ENCODE measurements at regions of chr2 and their contacts with region 1.

Region 1: GRCh38 chr2:51413726-51414125 is 381.8 kb upstream of the NRXN1 start:
- DNase-seq: no peak
- ATAC-seq: no peak
- H3K4me3 ChIP-seq: no peak overlapping the region
- H3K4me3 Mint-ChIP-seq: no peak overlapping the region
- H3K27ac ChIP-seq: no peak overlapping the region
- H3K27ac Mint-ChIP-seq: no peak overlapping the region
- H3K4me1 ChIP-seq: no peaks in the 10 kb centered on the region
- H3K4me1 Mint-ChIP-seq: no peaks in the 10 kb centered on the region
- H3K27me3 ChIP-seq: no peaks in the 10 kb centered on the region
- H3K27me3 Mint-ChIP-seq: no peaks in the 10 kb centered on the region
- CTCF ChIP-seq: no peak

Region 2: DNA sequence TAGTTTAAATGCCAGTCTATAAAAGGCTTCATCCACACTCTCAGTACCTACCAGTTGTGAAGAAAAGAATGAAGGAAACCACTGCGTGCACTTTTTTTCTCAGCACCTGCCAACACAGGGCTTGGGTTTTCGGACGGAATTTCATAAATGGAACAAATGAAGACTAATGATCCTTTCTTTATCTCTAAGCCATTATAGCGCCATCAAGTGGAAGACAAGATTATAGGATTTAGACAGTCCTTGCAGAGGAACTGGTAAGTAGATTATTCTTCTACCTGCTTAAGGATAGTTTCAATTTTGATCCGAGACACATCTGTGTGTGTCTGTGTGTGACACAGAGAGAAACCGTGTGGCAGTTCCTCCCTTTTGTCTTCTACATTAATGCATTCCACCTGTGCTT is 627.4 kb before region 1 on chr2:
- CTCF ChIA-PET with region 1: no interaction called
- POLR2A ChIA-PET with region 1: no interaction called
- intact Hi-C with region 1: no loop called
- DNase-seq: no peak
- ATAC-seq: no peak
- H3K4me3 ChIP-seq: no peak overlapping the region
- H3K4me3 Mint-ChIP-seq: no peak overlapping the region
- H3K27ac ChIP-seq: no peak overlapping the region
- H3K27ac Mint-ChIP-seq: no peak overlapping the region
- H3K4me1 ChIP-seq: no peaks in the 10 kb centered on the region
- H3K4me1 Mint-ChIP-seq: no peaks in the 10 kb centered on the region
- H3K27me3 ChIP-seq: no peaks in the 10 kb centered on the region
- H3K27me3 Mint-ChIP-seq: no peaks in the 10 kb centered on the region
- CTCF ChIP-seq: no peak

Region 3: GRCh38 chr2:51424418-51424817 is 10.7 kb after region 1 on chr2:
- CTCF ChIA-PET with region 1: no interaction called
- POLR2A ChIA-PET with region 1: no interaction called
- intact Hi-C with region 1: loop called in 1 of 2 experiments (anchors 1 kb)
- DNase-seq: no peak
- ATAC-seq: no peak
- H3K4me3 ChIP-seq: no peak overlapping the region
- H3K4me3 Mint-ChIP-seq: no peak overlapping the region
- H3K27ac ChIP-seq: no peak overlapping the region
- H3K27ac Mint-ChIP-seq: no peak overlapping the region
- H3K4me1 ChIP-seq: no peaks in the 10 kb centered on the region
- H3K4me1 Mint-ChIP-seq: no peaks in the 10 kb centered on the region
- H3K27me3 ChIP-seq: no peaks in the 10 kb centered on the region
- H3K27me3 Mint-ChIP-seq: no peaks in the 10 kb centered on the region
- CTCF ChIP-seq: no peak